Activated T-helper 1 cell treated with anti-CD3 and anti-CD28 coated beads, Interleukin-12 subunit alpha, Interleukin-12 subunit beta, Interleukin-2, Interleukin-4 antibody, amounts not matched to agents 30 ng/mL and 10 ng/mL and 1 ng/mL, durations not matched to agents 14 hours and 24 hours and 36 hours (primary cell): ENCODE measurements at regions of chr20 and their contacts with region 1.

Region 1: GRCh38 chr20:9407805-9408421 is 106.5 kb upstream of the LAMP5 start:
- DNase-seq: peak; percentile 22
- H3K4me3 Mint-ChIP-seq: no peak overlapping the region
- H3K27ac Mint-ChIP-seq: no peak overlapping the region
- H3K4me1 Mint-ChIP-seq: no peaks in the 10 kb centered on the region
- H3K27me3 Mint-ChIP-seq: no peaks in the 10 kb centered on the region

Region 2: DNA sequence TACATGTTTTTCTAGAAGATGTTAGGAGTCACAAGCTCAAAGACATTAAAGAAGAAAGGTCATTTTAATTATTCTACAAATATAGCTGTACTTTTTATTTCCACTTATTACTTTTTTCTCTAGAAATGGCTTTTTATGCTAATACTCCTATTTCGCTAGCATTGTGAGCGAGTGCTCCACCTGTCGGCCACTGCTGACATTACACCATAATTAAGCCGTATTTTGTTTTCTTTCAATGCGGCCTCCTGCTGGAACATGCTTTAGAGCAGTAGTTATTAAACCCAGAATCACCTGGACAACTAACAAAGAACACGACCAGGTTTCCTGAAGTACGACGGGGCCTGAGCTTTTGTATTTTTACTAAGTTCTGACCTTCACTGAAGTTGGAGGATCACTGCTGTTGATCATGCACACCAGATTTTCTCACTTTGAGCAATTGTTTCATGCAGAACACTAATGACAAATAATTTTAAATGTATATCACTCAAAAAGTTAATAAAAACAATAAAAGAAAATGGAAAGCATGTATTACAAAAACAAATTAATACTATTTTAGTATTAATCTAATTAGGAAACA is 505.0 kb after region 1 on chr20:
- intact Hi-C with region 1: loop called (anchors 10 kb)
- DNase-seq: no peak
- H3K4me3 Mint-ChIP-seq: no peak overlapping the region
- H3K27ac Mint-ChIP-seq: no peak overlapping the region
- H3K4me1 Mint-ChIP-seq: no peaks in the 10 kb centered on the region
- H3K27me3 Mint-ChIP-seq: peaks cover 4% of the 10 kb centered on the region